ENCODE measurements at regions of chr10 and their contacts with region 1.

Region 1: DNA sequence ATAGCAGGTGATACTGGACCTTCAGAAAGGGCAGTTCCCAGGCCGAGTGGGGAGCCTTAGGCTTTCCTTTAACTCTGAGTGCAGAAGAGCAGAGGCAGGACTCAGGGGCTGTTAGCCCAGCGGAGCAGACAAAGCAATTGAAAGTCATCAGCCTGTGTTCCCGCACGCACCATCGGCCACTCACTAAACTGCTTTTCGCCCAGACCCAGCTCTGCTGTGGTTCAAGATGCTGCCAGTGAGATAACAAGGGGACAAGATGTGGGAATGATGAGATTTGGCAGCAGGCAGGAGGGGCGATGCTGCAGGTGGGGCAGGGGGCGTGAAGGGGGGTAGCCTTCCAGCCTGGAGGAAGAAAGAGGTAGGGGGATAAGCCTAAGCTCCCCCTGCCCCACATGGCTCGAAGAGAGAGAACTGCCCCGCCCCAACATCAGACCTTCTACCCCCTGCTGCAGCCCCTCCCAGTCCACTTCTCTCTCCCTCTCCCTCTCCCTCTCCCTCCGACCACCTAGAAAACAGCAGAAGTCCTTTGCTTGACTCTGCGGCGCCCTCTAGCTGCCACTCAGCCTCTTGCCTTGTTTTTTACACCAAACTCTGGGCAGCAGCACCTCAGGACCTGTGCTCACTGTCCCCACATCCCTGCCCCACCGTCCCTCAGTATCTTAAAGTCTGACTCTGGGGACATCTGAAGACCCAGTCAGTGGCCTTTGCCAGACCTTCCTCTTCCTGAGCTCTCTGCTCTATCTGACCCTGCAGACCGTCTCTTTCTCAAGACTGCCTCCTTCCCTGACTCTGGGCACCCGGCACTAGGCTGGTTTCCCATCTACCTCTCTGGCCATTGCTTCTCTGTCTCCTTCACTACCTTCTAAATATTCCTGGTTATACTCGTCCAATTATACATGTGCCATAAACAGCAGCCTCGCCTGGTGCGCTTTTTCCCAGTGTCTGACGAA is 110.5 kb downstream of the C10orf105 start:
- DNase-seq: peak; percentile 49
- ATAC-seq: peak; percentile 75
- H3K4me3 ChIP-seq: no peak overlapping the region
- H3K27ac ChIP-seq: no peak overlapping the region
- H3K4me1 ChIP-seq: peaks cover 11 to 27% of the 10 kb centered on the region in 2 experiments
- H3K27me3 ChIP-seq: no peaks in the 10 kb centered on the region
- CTCF ChIP-seq: peak; percentile 59 to 94 (median 88)
- POLR2A ChIP-seq: no peak
- RAD21 ChIP-seq: peak; percentile 75

Region 2: GRCh38 chr10:70887804-70888800 is 721.0 kb before region 1 on chr10 and contains the start of gene PCBD1:
- CTCF ChIA-PET with region 1: no interaction called
- POLR2A ChIA-PET with region 1: no interaction called
- RAD21 ChIA-PET with region 1: no interaction called
- intact Hi-C with region 1: no loop called
- DNase-seq: peak; percentile 54
- ATAC-seq: peak; percentile 83
- H3K4me3 ChIP-seq: peak within 1 kb of the TSS; percentile 78 to 85
- H3K27ac ChIP-seq: peak within 1 kb of the TSS; percentile 96
- H3K4me1 ChIP-seq: peaks cover 16 to 40% of the 10 kb centered on the region in 2 experiments
- H3K27me3 ChIP-seq: no peaks in the 10 kb centered on the region
- CTCF ChIP-seq: no peak
- POLR2A ChIP-seq: peak; percentile 51
- RAD21 ChIP-seq: no peak
- total RNA-seq, gene PCBD1: 163 TPM

Region 3: DNA sequence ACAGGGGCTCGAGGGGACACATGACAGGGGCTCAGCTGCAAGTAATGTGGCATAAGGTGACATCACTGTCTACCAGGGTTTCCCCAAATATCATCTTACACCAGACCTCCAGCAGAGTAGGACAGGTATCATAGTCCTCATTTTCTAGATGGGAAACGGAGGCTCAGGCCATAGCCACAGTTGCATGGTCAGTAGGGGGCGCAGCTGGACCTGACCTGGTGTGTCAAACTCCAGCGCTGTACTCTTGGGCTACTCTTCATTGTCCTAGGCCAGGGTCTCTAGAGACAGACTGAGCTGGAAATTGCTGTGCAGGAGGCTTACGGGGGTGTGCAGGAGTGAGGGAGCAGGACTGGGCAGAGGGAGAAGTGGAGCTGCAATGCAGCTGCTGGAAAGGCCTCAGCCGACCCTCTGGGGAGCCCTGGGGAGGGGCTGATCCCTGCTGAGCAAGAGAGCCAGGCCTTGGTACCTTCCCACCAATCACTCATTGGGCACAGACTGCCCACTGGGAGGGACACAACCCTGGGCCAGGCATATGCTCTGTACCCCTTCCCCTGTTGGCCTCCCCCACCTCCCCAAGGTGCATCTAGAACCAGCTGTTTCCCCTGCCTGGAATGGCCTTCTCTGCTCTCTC is 122.5 kb before region 1 on chr10:
- CTCF ChIA-PET with region 1: no interaction called
- POLR2A ChIA-PET with region 1: no interaction called
- RAD21 ChIA-PET with region 1: no interaction called
- intact Hi-C with region 1: loop called (anchors 1 kb)
- DNase-seq: peak; percentile 36
- ATAC-seq: peak; percentile 99
- H3K4me3 ChIP-seq: no peak overlapping the region
- H3K27ac ChIP-seq: no peak overlapping the region
- H3K4me1 ChIP-seq: no peaks in the 10 kb centered on the region
- H3K27me3 ChIP-seq: 0 out of 2 replicates have a peak, but pooled peaks cover 4% of the 10 kb centered on the region
- CTCF ChIP-seq: peak; percentile 76 to 96 (median 91)
- POLR2A ChIP-seq: no peak
- RAD21 ChIP-seq: peak; percentile 86

Region 4: GRCh38 chr10:71597821-71598498 is 11.1 kb before region 1 on chr10:
- CTCF ChIA-PET with region 1: interaction called, 11 read pairs
- POLR2A ChIA-PET with region 1: no interaction called
- RAD21 ChIA-PET with region 1: no interaction called
- intact Hi-C with region 1: no loop called
- DNase-seq: no peak
- ATAC-seq: no peak
- H3K4me3 ChIP-seq: no peak overlapping the region
- H3K27ac ChIP-seq: no peak overlapping the region
- H3K4me1 ChIP-seq: peaks cover 2 to 9% of the 10 kb centered on the region in 2 experiments; a peak in 3 of 4 replicates
- H3K27me3 ChIP-seq: no peaks in the 10 kb centered on the region
- CTCF ChIP-seq: no peak
- POLR2A ChIP-seq: no peak
- RAD21 ChIP-seq: no peak

Region 5: GRCh38 chr10:71634531-71635164 is 25.6 kb after region 1 on chr10:
- CTCF ChIA-PET with region 1: no interaction called
- POLR2A ChIA-PET with region 1: no interaction called
- RAD21 ChIA-PET with region 1: no interaction called
- intact Hi-C with region 1: no loop called
- DNase-seq: no peak
- ATAC-seq: no peak
- H3K4me3 ChIP-seq: no peak overlapping the region
- H3K27ac ChIP-seq: no peak overlapping the region
- H3K4me1 ChIP-seq: no peaks in the 10 kb centered on the region
- H3K27me3 ChIP-seq: no peaks in the 10 kb centered on the region
- CTCF ChIP-seq: no peak
- POLR2A ChIP-seq: no peak
- RAD21 ChIP-seq: no peak

Measured in HCT116 (cell line).